ENCODE measurements at regions of chr5 and their contacts with region 1.

Region 1: DNA sequence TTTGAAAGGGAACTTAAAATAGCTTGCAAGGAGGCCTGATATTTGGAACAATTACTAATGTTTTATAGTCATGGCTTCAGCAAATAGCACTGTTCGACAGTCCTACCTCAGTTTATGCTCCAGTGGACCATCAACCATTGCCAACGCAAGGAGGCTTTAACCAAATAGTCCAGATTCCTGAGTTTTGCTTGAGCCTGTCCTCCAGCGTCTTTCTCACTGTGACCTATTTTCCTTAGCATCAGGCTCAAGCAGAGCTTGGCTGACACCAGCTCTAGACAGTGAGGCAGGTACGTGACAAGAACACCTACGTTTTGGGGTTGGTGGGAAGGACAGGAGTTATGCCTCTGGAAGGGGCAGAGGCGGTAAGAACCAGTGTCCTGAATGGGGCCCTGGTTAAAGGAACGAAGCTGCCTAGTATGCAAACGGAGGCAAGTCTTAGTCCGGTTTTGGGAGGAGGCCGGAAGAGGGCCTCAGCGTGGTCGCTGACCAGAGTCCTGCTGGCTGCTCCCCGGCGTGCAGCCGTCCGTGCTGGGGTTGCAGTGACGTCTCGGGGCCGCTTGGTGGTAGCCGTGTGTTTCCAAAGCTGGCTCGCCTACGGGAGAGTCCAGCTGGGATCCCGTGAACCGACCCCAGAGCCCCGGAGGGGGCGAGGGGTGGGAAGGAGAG is 998 bp upstream of the FGF18 start:
- DNase-seq: peak; percentile 81
- H3K4me3 ChIP-seq: peak overlapping the region; percentile 73
- H3K27ac ChIP-seq: peak overlapping the region; percentile 89
- H3K4me1 ChIP-seq: peaks cover 53% of the 10 kb centered on the region
- H3K27me3 ChIP-seq: peaks cover 11% of the 10 kb centered on the region
- CTCF ChIP-seq: peak; percentile 96

Region 2: DNA sequence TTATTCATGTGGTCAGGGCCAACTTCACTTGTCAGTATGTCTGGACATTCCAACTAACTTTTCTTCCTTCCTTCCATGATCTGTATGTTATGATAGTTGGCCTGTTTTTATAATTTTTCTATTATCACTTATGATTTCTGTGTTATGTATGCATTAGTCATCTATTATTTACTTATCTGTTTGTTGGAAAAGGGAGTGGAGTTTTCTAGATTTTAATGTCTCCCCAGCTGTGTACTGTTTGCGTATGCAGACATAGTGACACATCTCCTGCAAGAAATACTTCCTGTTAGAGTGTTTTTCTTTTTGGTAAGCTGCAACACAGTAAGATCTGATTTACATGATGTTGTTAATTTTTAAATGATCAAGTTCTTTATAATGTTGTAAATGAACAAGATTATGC is 1429.5 kb before region 1 on chr5:
- intact Hi-C with region 1: no loop called
- DNase-seq: no peak
- H3K4me3 ChIP-seq: no peak overlapping the region
- H3K27ac ChIP-seq: no peak overlapping the region
- H3K4me1 ChIP-seq: no peaks in the 10 kb centered on the region
- H3K27me3 ChIP-seq: peaks cover 63% of the 10 kb centered on the region
- CTCF ChIP-seq: no peak

Region 3: DNA sequence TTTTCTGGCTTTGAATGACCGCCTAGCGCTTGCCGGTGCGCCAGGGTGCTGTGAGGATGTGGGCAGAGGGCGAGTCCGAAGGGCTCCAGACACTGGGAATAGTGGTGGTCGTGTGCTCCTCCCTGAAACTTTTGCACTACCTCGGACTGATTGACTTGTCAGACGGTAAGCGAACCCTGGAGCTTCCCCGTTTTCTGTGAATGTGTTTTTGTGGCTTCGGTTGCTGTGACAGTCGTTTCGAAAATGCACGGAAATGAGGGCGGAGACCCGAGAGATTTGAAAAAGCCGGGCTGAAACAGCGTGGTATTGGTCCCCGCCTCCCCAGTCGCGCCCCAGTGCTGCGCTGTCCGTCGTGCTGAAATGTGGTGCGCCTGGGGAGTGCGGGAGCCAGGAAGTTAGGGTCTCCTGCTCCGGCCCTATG is 737.4 kb before region 1 on chr5:
- intact Hi-C with region 1: no loop called
- DNase-seq: peak; percentile 15
- H3K4me3 ChIP-seq: peak overlapping the region; percentile 27
- H3K27ac ChIP-seq: no peak overlapping the region
- H3K4me1 ChIP-seq: peaks cover 17% of the 10 kb centered on the region
- H3K27me3 ChIP-seq: peaks cover 25% of the 10 kb centered on the region
- CTCF ChIP-seq: no peak

Region 4: DNA sequence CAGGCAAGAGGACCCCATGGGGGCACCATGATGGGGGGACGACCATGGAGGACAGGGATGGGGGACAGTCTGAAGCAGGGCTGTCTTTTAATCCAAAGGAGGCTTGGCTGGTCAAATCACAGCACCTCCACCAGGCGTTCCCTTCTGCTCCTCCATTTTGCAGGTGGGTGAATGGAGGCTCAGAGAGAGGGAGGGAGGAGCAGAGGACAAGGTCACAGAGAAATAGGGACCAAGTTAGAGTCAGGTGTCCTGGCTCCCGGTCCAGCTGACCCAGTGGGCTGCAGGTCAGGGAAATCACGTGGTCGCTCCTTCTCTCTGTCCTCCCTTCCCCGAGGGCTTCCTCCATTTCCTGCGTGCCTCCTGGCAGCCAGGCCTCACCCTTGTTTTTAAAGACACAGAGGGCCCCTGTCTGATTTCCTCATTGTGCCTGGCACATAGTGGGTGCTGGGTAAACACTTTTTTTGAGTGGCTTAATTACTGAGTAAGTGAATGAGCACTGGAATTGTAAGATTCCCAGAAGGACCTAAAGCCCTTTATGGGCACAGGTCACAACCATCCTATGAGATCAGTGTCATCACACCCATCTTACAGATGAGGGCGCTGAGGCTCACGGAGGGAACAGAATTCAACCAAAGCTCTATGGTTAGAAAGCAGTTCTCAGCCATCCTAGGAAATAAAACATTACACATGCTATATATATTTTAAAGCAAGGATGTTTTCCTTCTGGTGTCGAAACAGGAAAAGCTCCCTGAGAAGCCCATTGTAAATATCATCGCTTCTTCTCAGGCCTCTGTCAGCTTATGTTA is 211.0 kb after region 1 on chr5:
- intact Hi-C with region 1: loop called (anchors 10 kb)
- DNase-seq: no peak
- H3K4me3 ChIP-seq: peak overlapping the region; percentile 36
- H3K27ac ChIP-seq: no peak overlapping the region
- H3K4me1 ChIP-seq: peaks cover 17% of the 10 kb centered on the region
- H3K27me3 ChIP-seq: peaks cover 11% of the 10 kb centered on the region
- CTCF ChIP-seq: no peak

Region 5: DNA sequence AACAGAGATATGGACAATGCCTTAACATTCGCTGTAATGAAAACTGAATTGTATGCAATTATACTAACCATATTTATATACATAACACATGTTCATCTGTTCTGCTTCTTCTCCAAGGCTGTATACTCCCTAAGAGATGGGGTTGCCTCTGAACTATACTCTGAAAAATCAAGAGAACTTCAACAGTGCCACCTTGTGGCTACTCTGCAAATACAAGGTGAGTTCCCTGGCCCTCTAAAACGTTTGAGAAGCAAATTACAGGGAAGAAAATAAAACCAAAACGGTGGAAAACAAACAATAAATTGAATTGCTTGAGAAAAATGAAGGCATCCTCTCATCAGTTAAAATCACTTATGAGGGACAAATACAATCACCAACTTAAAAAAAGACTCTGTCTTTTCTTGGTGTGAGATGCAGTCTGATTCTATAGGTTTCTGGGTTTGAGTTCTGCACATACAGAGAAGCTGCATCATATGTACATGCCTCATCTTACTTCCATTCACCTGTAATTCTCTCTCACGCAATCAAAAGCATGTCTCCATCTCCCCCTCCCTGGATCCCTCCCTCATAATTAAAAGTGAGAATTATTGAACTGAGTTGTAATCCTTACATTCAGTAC is 489.4 kb after region 1 on chr5:
- intact Hi-C with region 1: loop called (anchors 5 kb)
- DNase-seq: no peak
- H3K4me3 ChIP-seq: no peak overlapping the region
- H3K27ac ChIP-seq: no peak overlapping the region
- H3K4me1 ChIP-seq: peaks cover 40% of the 10 kb centered on the region
- H3K27me3 ChIP-seq: no peaks in the 10 kb centered on the region
- CTCF ChIP-seq: peak; percentile 85

Region 6: GRCh38 chr5:172044631-172045314 is 626.3 kb after region 1 on chr5:
- intact Hi-C with region 1: loop called (anchors 10 kb)
- DNase-seq: no peak
- H3K4me3 ChIP-seq: no peak overlapping the region
- H3K27ac ChIP-seq: peak overlapping the region; percentile 15
- H3K4me1 ChIP-seq: peaks cover 16% of the 10 kb centered on the region
- H3K27me3 ChIP-seq: no peaks in the 10 kb centered on the region
- CTCF ChIP-seq: no peak